Sigmoid colon (tissue), 7 donors: ENCODE measurements at regions of chr18 and their contacts with region 1.

Region 1: GRCh38 chr18:76875390-76876325 is 53.3 kb downstream of the ZNF236 start:
- DNase-seq: no peak
- H3K4me3 ChIP-seq: no peak overlapping the region
- H3K27ac ChIP-seq: no peak overlapping the region
- H3K4me1 ChIP-seq: no peaks in the 10 kb centered on the region
- H3K27me3 ChIP-seq: no peaks in the 10 kb centered on the region
- CTCF ChIP-seq: peak; percentile 28 to 65 (median 44)
- EP300 ChIP-seq: no peak
- POLR2A ChIP-seq: no peak

Region 2: DNA sequence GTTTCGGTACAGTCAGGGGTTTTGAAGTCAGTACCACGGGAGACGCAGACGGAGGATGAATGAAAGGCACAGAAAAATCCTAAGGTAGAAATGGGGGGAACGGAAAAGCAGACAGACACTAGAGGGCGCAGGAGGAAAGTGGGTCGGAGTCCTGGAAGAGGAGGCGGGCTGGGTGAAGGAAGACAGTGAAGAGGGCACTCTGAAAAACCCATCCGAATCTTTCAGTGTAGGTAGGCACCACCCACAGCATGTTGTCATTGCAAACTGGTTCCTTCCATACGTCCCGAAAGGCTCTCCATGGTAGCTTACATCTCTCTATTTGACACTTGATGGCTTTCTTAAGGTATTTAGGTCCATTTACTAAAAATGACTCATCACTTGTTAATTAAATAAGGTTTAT is 71.8 kb before region 1 on chr18:
- intact Hi-C with region 1: loop called (anchors 2 kb)
- DNase-seq: peak; percentile 77
- H3K4me3 ChIP-seq: no peak overlapping the region
- H3K27ac ChIP-seq: no peak overlapping the region
- H3K4me1 ChIP-seq: peaks cover 0 to 15% (median 13%) of the 10 kb centered on the region in 4 donors
- H3K27me3 ChIP-seq: peaks cover 0 to 4% (median 0%) of the 10 kb centered on the region in 3 donors
- CTCF ChIP-seq: peak; percentile 44 to 82 (median 71)
- EP300 ChIP-seq: no peak
- POLR2A ChIP-seq: no peak

Region 3: DNA sequence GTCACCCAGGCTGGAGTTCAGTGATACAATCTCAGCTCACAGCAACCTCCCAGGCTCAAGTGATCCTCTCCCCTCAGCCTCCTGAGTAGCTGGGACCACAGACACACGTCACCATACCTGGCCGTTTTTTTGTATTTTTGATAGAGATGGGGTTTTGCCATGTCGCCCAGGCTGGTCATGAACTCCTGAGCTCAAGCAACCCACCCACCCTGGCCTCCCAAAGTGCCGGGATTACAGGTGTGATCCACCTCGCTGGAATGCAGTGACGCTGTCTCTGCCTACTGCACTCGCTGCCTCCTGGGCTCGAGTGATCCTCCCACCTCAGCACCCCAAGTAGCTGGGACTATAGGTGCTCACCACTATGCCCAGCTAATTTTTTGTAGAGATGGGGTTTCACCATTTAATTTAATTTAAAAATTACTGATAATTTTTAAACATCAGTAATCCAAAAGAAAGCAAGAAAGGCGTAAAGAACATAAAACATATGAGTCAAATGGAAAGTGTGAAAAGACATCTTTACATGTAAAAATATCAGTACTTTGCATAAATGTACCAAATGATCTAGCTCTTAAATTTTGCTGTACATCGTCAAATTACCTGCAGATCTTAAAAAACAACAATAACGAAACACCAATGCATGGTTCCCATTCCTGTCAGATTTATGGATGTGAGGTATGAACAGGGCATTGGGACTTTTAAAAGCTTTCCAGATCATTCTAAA is 56.1 kb before region 1 on chr18:
- intact Hi-C with region 1: no loop called
- DNase-seq: peak; percentile 39
- H3K4me3 ChIP-seq: no peak overlapping the region
- H3K27ac ChIP-seq: no peak overlapping the region
- H3K4me1 ChIP-seq: peaks cover 0 to 44% (median 26%) of the 10 kb centered on the region in 4 donors
- H3K27me3 ChIP-seq: no peaks in the 10 kb centered on the region
- CTCF ChIP-seq: no peak
- EP300 ChIP-seq: no peak
- POLR2A ChIP-seq: no peak